ENCODE measurements at regions of chr11 and their contacts with region 1.

Region 1: GRCh38 chr11:69642913-69643632 is 2.1 kb downstream of the CCND1 start:
- DNase-seq: peak; percentile 56 to 87 (median 73)
- ATAC-seq: peak; percentile 75
- H3K4me3 ChIP-seq: peak overlapping the region; percentile 61 to 65
- H3K4me3 Mint-ChIP-seq: peak overlapping the region; percentile 78
- H3K27ac ChIP-seq: no peak overlapping the region
- H3K27ac Mint-ChIP-seq: no peak overlapping the region
- H3K4me1 ChIP-seq: peaks cover 30% of the 10 kb centered on the region
- H3K4me1 Mint-ChIP-seq: peaks cover 23% of the 10 kb centered on the region
- H3K27me3 ChIP-seq: peaks cover 5 to 28% of the 10 kb centered on the region in 2 experiments
- H3K27me3 Mint-ChIP-seq: peaks cover 21% of the 10 kb centered on the region
- CTCF ChIP-seq: peak; percentile 97

Region 2: GRCh38 chr11:68903288-68904247 is 739.5 kb before region 1 on chr11 and contains the starts of genes IGHMBP2 and MRPL21:
- CTCF ChIA-PET with region 1: no interaction called
- POLR2A ChIA-PET with region 1: no interaction called
- intact Hi-C with region 1: loop called in 1 of 2 experiments (anchors 5 kb)
- DNase-seq: peak; percentile 76 to 93 (median 86)
- ATAC-seq: peak; percentile 90
- H3K4me3 ChIP-seq: peak within 1 kb of the TSS; percentile 55 to 82
- H3K4me3 Mint-ChIP-seq: peak within 1 kb of the TSS; percentile 98
- H3K27ac ChIP-seq: peak within 1 kb of the TSS; percentile 64 to 87
- H3K27ac Mint-ChIP-seq: peak within 1 kb of the TSS; percentile 97
- H3K4me1 ChIP-seq: peaks cover 19% of the 10 kb centered on the region
- H3K4me1 Mint-ChIP-seq: peaks cover 46% of the 10 kb centered on the region
- H3K27me3 ChIP-seq: no peaks in the 10 kb centered on the region
- H3K27me3 Mint-ChIP-seq: no peaks in the 10 kb centered on the region
- CTCF ChIP-seq: no peak
- total RNA-seq, gene IGHMBP2: 25.5 to 27.3 TPM
- total RNA-seq, gene MRPL21: 48.4 to 53.6 TPM

Region 3: GRCh38 chr11:69101115-69101791 is 541.8 kb before region 1 on chr11:
- CTCF ChIA-PET with region 1: interaction called, 69 read pairs
- POLR2A ChIA-PET with region 1: no interaction called
- intact Hi-C with region 1: loop called in 1 of 2 experiments (anchors 1 kb)
- DNase-seq: peak; percentile 57 to 85 (median 70)
- ATAC-seq: peak; percentile 99
- H3K4me3 ChIP-seq: no peak overlapping the region
- H3K4me3 Mint-ChIP-seq: no peak overlapping the region
- H3K27ac ChIP-seq: no peak overlapping the region
- H3K27ac Mint-ChIP-seq: no peak overlapping the region
- H3K4me1 ChIP-seq: no peaks in the 10 kb centered on the region
- H3K4me1 Mint-ChIP-seq: peaks cover 4% of the 10 kb centered on the region
- H3K27me3 ChIP-seq: peaks cover 0 to 6% of the 10 kb centered on the region in 2 experiments
- H3K27me3 Mint-ChIP-seq: peaks cover 3% of the 10 kb centered on the region
- CTCF ChIP-seq: peak; percentile 95

Region 4: GRCh38 chr11:69654569-69655327 is 11.7 kb after region 1 on chr11:
- CTCF ChIA-PET with region 1: interaction called, 13 read pairs
- POLR2A ChIA-PET with region 1: no interaction called
- intact Hi-C with region 1: no loop called
- DNase-seq: no peak
- ATAC-seq: no peak
- H3K4me3 ChIP-seq: no peak overlapping the region
- H3K4me3 Mint-ChIP-seq: no peak overlapping the region
- H3K27ac ChIP-seq: no peak overlapping the region
- H3K27ac Mint-ChIP-seq: no peak overlapping the region
- H3K4me1 ChIP-seq: no peaks in the 10 kb centered on the region
- H3K4me1 Mint-ChIP-seq: no peaks in the 10 kb centered on the region
- H3K27me3 ChIP-seq: no peaks in the 10 kb centered on the region
- H3K27me3 Mint-ChIP-seq: no peaks in the 10 kb centered on the region
- CTCF ChIP-seq: no peak

Region 5: DNA sequence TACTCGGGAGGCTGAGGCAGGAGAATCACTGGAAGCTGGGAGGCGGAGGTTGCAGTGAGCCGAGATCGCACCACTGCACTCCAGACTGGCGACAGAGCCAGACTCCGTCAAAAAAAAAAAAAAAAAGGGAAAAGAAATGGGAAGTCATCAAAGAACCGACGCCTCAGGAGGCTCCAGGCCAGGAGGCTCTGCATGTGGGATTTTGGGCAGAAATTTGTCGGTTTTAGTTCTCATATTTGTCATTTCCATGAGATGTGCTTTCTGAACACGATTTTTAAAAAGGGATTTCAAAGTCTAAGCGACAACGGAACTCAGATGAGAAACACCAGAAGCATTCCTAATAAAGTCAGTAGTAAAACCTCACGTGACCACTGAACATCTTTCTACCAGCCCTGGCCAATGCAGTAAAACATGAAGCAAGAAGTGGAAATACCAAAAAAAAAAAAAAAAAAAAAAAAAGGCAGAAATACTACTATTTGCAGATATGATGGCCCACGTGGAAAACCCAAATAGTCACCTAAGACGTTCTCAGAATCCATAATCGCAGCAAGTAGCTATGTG is 32.8 kb after region 1 on chr11:
- CTCF ChIA-PET with region 1: interaction called, 4 read pairs
- POLR2A ChIA-PET with region 1: no interaction called
- intact Hi-C with region 1: loop called (anchors 1 to 2 kb)
- DNase-seq: no peak
- ATAC-seq: no peak
- H3K4me3 ChIP-seq: peak overlapping the region; percentile 68 to 100
- H3K4me3 Mint-ChIP-seq: peak overlapping the region; percentile 94
- H3K27ac ChIP-seq: no peak overlapping the region
- H3K27ac Mint-ChIP-seq: no peak overlapping the region
- H3K4me1 ChIP-seq: peaks cover 31% of the 10 kb centered on the region
- H3K4me1 Mint-ChIP-seq: peaks cover 26% of the 10 kb centered on the region
- H3K27me3 ChIP-seq: no peaks in the 10 kb centered on the region
- H3K27me3 Mint-ChIP-seq: peaks cover 2% of the 10 kb centered on the region
- CTCF ChIP-seq: no peak

Region 6: GRCh38 chr11:69700278-69701140 is 57.4 kb after region 1 on chr11:
- CTCF ChIA-PET with region 1: no interaction called
- POLR2A ChIA-PET with region 1: no interaction called
- intact Hi-C with region 1: no loop called
- DNase-seq: no peak
- ATAC-seq: no peak
- H3K4me3 ChIP-seq: no peak overlapping the region
- H3K4me3 Mint-ChIP-seq: no peak overlapping the region
- H3K27ac ChIP-seq: no peak overlapping the region
- H3K27ac Mint-ChIP-seq: no peak overlapping the region
- H3K4me1 ChIP-seq: peaks cover 6% of the 10 kb centered on the region
- H3K4me1 Mint-ChIP-seq: peaks cover 9% of the 10 kb centered on the region
- H3K27me3 ChIP-seq: peaks cover 9 to 15% of the 10 kb centered on the region in 2 experiments
- H3K27me3 Mint-ChIP-seq: peaks cover 50% of the 10 kb centered on the region
- CTCF ChIP-seq: no peak